Aorta (tissue), 5 donors: ENCODE measurements at regions of chr13 and their contacts with region 1.

Region 1: DNA sequence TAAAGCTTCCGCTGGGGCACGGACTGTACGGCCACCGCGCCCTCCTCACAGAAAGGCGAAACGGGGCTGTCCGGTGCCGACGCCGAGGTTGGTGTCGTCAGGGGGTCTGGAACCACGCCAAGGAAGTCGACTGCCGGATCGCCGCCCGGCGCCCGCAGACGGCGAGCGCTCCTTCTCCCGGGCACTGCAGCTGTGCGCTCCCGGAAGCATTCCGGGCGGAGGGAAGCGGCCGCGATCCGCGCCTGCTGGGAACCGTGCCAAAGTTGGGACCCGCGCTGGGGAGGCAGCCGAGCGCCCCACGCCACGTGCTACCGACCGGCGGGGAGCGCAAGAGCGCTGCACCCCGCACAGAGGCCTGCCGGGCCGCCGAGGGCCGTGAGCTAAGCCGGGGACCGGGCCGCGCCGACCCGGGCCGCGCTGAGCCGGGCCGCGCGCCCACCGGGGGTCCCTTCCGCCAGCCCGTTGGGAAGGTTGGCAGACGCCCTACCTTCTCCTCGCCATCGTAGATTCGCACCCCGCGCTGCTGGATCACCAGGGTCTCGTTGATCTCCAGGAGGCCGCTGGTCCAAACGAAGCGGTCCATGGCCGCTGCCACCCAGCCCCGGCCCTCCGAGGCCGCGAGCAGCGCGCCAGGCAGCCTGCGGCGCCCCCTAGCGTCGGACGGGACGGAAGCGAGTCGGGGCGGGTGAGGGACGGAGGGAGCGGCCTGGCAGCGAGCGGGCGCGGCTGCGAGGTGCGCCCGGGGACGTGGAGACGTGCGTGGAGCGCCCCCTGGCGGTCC is at the start of gene VPS36:
- DNase-seq: peak; percentile 97 to 99
- ATAC-seq: peak; percentile 97
- H3K4me3 ChIP-seq: peak within 1 kb of the TSS; percentile 82
- H3K27ac ChIP-seq: peak within 1 kb of the TSS; percentile 57 to 69
- H3K4me1 ChIP-seq: peaks cover 0 to 4% of the 10 kb centered on the region in 2 donors
- H3K27me3 ChIP-seq: no peaks in the 10 kb centered on the region
- total RNA-seq, gene VPS36: 45.5 to 54.3 TPM

Region 2: GRCh38 chr13:52011632-52012511 is 438.3 kb before region 1 on chr13 and contains the start of gene ALG11:
- intact Hi-C with region 1: loop called in 1 of 2 experiments (anchors 10 kb)
- DNase-seq: peak; percentile 100
- ATAC-seq: peak; percentile 100
- H3K4me3 ChIP-seq: peak within 1 kb of the TSS; percentile 96 to 99
- H3K27ac ChIP-seq: no peak within 1 kb of the TSS
- H3K4me1 ChIP-seq: no peaks in the 10 kb centered on the region
- H3K27me3 ChIP-seq: no peaks in the 10 kb centered on the region
- total RNA-seq, gene ALG11: 29.9 to 32.5 TPM

Region 3: GRCh38 chr13:52194184-52194868 is 255.9 kb before region 1 on chr13:
- intact Hi-C with region 1: loop called in 1 of 2 experiments (anchors 10 kb)
- DNase-seq: peak; percentile 90 to 92
- ATAC-seq: peak; percentile 95
- H3K4me3 ChIP-seq: peak overlapping the region; percentile 56 to 70
- H3K27ac ChIP-seq: peak overlapping the region in 1 of 2 donors; percentile 49
- H3K4me1 ChIP-seq: no peaks in the 10 kb centered on the region
- H3K27me3 ChIP-seq: no peaks in the 10 kb centered on the region

Region 4: GRCh38 chr13:52652196-52652979 is 202.2 kb after region 1 on chr13 and contains the start of gene SUGT1:
- intact Hi-C with region 1: loop called in 1 of 2 experiments (anchors 10 kb)
- DNase-seq: peak; percentile 99
- ATAC-seq: peak; percentile 100
- H3K4me3 ChIP-seq: peak within 1 kb of the TSS; percentile 92 to 98
- H3K27ac ChIP-seq: peak within 1 kb of the TSS; percentile 57 to 97
- H3K4me1 ChIP-seq: peaks cover 2 to 4% of the 10 kb centered on the region in 2 donors
- H3K27me3 ChIP-seq: no peaks in the 10 kb centered on the region
- total RNA-seq, gene SUGT1: 44.2 to 44.4 TPM